Heart left ventricle (tissue), 16 donors: ENCODE measurements at regions of chr1 and their contacts with region 1.

Region 1: DNA sequence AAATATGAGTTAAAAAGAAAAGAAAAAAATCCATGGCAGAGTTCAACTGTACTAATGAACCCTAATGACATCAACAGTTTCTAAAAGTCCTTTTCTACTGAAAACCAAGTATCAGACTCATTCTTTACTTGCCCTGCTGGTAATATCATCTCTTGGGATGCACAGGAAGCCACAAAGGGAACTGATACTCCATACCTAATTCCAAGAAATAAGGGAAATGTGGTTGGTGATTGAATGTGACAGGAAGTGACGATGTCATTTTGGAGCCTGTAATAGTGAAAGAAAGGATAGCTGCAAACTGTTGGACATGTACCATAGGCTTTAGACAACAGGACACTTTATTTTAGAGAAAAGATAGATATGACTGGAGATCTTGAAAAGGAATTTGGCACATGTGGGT is 98.7 kb upstream of the VAV3 start:
- DNase-seq: no peak
- ATAC-seq: peak in 1 of 4 donors; percentile 59
- H3K4me3 ChIP-seq: no peak overlapping the region
- H3K27ac ChIP-seq: peak overlapping the region in 1 of 12 donors; percentile 72
- H3K4me1 ChIP-seq: peaks cover 0 to 25% (median 0%) of the 10 kb centered on the region in 12 donors
- H3K27me3 ChIP-seq: no peaks in the 10 kb centered on the region
- CTCF ChIP-seq: no peak
- POLR2A ChIP-seq: no peak

Region 2: GRCh38 chr1:108049178-108049819 is 14.4 kb before region 1 on chr1:
- intact Hi-C with region 1: loop called in 1 of 10 experiments (anchors 2 kb)
- DNase-seq: peak; percentile 26 to 61 (median 38)
- ATAC-seq: peak in 2 of 4 donors; percentile 44 to 52
- H3K4me3 ChIP-seq: no peak overlapping the region
- H3K27ac ChIP-seq: peak overlapping the region in 4 of 12 donors; percentile 7 to 93 (median 24)
- H3K4me1 ChIP-seq: peaks cover 0 to 64% (median 20%) of the 10 kb centered on the region in 12 donors
- H3K27me3 ChIP-seq: no peaks in the 10 kb centered on the region
- CTCF ChIP-seq: peak in 10 of 12 donors; percentile 9 to 54 (median 50)
- POLR2A ChIP-seq: no peak

Region 3: DNA sequence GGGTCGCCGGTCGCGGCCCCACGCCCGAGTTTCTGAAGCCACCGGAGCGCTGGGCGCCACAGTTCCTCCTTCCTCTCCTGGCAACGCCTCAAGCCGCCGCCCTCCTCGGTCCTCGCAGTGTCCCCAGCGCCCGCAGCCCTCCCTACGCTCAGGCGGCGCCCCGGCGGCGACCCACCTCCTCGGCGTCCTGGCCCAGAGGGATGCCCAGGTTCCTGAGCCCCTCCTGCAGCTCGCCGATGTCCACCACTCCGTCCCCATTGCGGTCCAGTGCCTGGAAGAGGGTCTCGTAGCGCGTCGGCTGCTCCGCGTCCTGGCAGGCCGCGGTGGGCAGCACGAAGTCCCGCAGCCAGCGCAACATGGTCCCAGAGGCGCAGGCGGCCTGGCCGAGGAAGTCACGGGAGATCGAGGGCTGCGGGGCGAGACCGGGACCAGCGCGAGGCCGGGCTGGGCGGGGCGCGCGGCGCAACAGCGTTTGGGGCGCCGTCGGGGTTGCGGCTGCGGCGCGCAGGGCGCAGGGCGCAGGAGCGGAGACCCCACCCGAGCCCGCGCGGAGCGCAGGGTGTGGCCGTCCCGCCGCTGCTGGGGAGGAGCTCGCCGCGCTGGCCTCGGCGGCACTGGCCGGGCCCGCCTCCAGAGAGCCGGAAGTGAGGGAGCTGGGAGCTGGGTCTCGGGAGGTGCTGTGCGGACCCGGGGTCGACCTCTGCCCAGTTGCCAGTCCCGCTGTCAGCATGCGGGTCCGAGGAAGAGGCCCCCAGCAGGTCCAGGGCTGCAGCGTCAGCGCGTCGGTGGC is 136.3 kb after region 1 on chr1 and contains the start of gene SLC25A24:
- intact Hi-C with region 1: no loop called
- DNase-seq: peak; percentile 88 to 94 (median 89)
- ATAC-seq: peak; percentile 89 to 99 (median 98)
- H3K4me3 ChIP-seq: peak within 1 kb of the TSS; percentile 77 to 98 (median 92)
- H3K27ac ChIP-seq: peak within 1 kb of the TSS; percentile 94 to 99 (median 96)
- H3K4me1 ChIP-seq: peaks cover 0 to 39% (median 20%) of the 10 kb centered on the region in 12 donors
- H3K27me3 ChIP-seq: no peaks in the 10 kb centered on the region
- CTCF ChIP-seq: no peak
- POLR2A ChIP-seq: peak in 1 of 2 donors; percentile 51
- total RNA-seq, gene SLC25A24: 10.3 to 24.0 (median 15.8) TPM